ENCODE measurements at regions of chr1 and their contacts with region 1.

Region 1: DNA sequence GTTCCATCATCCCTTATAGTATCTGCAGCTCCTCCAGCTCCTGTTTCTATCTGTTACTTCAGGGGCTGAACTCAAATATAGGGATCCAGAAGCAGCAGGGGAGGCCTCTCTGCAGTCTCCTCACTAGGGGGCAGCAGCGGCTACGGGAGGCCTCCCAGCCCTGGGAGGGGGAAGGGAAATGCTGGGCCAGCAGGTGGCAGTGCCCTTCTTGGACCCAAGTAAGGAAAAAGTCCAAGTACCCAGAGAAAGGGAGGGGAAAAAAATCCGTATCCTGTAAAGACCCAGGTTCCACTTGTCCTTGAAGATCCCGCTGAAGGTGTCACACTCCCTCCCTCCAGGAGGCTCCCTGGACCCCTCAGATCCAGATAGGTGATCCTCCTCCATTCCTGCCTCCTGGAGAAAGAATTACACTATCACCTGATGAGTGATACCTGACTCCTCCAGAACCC is 14.1 kb upstream of the NUAK2 start:
- DNase-seq: peak; percentile 87
- ATAC-seq: peak; percentile 96
- H3K4me3 ChIP-seq: no peak overlapping the region
- H3K4me3 Mint-ChIP-seq: no peak overlapping the region
- H3K27ac ChIP-seq: no peak overlapping the region
- H3K27ac Mint-ChIP-seq: no peak overlapping the region
- H3K4me1 ChIP-seq: peaks cover 0 to 4% of the 10 kb centered on the region in 2 donors
- H3K4me1 Mint-ChIP-seq: peaks cover 9% of the 10 kb centered on the region
- H3K27me3 ChIP-seq: no peaks in the 10 kb centered on the region
- H3K27me3 Mint-ChIP-seq: no peaks in the 10 kb centered on the region
- CTCF ChIP-seq: peak; percentile 91

Region 2: GRCh38 chr1:205477759-205478247 is 142.1 kb after region 1 on chr1:
- CTCF ChIA-PET with region 1: interaction called, 15 read pairs
- POLR2A ChIA-PET with region 1: no interaction called
- intact Hi-C with region 1: no loop called
- DNase-seq: no peak
- ATAC-seq: no peak
- H3K4me3 ChIP-seq: no peak overlapping the region
- H3K4me3 Mint-ChIP-seq: no peak overlapping the region
- H3K27ac ChIP-seq: no peak overlapping the region
- H3K27ac Mint-ChIP-seq: no peak overlapping the region
- H3K4me1 ChIP-seq: peaks cover 26 to 29% of the 10 kb centered on the region in 2 donors
- H3K4me1 Mint-ChIP-seq: peaks cover 27% of the 10 kb centered on the region
- H3K27me3 ChIP-seq: peaks cover 0 to 35% (median 10%) of the 10 kb centered on the region in 4 experiments
- H3K27me3 Mint-ChIP-seq: peaks cover 24% of the 10 kb centered on the region
- CTCF ChIP-seq: no peak